Endothelial cell of umbilical vein (primary cell): ENCODE measurements at regions of chr1 and their contacts with region 1.

Region 1: GRCh38 chr1:3491291-3492246 is 37.1 kb downstream of the ARHGEF16 start:
- DNase-seq: peak; percentile 62
- H3K4me3 ChIP-seq: no peak overlapping the region
- H3K27ac ChIP-seq: no peak overlapping the region
- H3K4me1 ChIP-seq: no peaks in the 10 kb centered on the region
- H3K27me3 ChIP-seq: no peaks in the 10 kb centered on the region
- CTCF ChIP-seq: peak; percentile 88 to 98
- POLR2A ChIP-seq: no peak

Region 2: DNA sequence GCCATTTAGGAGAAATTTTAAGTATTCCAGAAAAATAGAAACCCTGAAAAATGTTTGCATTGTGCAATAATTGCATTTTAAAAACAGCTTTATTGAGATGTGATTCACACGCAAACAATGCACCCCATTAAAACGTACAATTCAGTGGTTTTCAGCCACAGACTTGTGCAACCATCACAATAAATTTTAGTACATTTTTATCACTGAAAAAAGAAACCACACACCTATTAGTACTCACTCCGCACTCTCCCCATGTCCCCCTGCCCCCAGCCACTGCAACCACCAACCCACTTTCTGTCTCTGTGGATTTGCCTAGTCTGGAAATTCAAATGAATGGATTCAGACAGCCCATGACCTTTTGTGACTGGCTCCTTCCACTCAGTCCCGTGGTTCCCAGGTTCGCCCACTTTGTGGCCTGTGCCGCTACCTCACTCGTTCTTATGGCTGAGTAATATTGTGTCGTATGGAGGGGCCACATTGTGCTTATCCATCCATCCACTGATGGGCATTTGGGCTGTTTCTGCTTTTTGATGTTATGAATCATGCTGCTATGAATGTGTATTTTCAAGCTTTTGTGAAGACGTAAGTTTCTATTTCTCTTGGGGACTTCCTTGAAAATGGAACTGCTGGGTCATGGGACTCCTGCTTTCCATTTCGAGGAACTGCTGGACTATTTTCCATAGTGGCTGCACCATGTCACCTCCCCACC is 184.8 kb before region 1 on chr1:
- CTCF ChIA-PET with region 1: no interaction called
- POLR2A ChIA-PET with region 1: no interaction called
- dilution Hi-C with region 1: no loop called
- intact Hi-C with region 1: no loop called
- DNase-seq: no peak
- H3K4me3 ChIP-seq: no peak overlapping the region
- H3K27ac ChIP-seq: no peak overlapping the region
- H3K4me1 ChIP-seq: no peaks in the 10 kb centered on the region
- H3K27me3 ChIP-seq: no peaks in the 10 kb centered on the region
- CTCF ChIP-seq: no peak
- POLR2A ChIP-seq: no peak

Region 3: GRCh38 chr1:3504151-3504821 is 12.7 kb after region 1 on chr1:
- CTCF ChIA-PET with region 1: interaction called, 15 read pairs
- POLR2A ChIA-PET with region 1: no interaction called
- dilution Hi-C with region 1: no loop called
- intact Hi-C with region 1: no loop called
- DNase-seq: peak; percentile 94
- H3K4me3 ChIP-seq: no peak overlapping the region
- H3K27ac ChIP-seq: peak overlapping the region; percentile 90
- H3K4me1 ChIP-seq: peaks cover 10% of the 10 kb centered on the region
- H3K27me3 ChIP-seq: no peaks in the 10 kb centered on the region
- CTCF ChIP-seq: no peak
- POLR2A ChIP-seq: no peak

Region 4: DNA sequence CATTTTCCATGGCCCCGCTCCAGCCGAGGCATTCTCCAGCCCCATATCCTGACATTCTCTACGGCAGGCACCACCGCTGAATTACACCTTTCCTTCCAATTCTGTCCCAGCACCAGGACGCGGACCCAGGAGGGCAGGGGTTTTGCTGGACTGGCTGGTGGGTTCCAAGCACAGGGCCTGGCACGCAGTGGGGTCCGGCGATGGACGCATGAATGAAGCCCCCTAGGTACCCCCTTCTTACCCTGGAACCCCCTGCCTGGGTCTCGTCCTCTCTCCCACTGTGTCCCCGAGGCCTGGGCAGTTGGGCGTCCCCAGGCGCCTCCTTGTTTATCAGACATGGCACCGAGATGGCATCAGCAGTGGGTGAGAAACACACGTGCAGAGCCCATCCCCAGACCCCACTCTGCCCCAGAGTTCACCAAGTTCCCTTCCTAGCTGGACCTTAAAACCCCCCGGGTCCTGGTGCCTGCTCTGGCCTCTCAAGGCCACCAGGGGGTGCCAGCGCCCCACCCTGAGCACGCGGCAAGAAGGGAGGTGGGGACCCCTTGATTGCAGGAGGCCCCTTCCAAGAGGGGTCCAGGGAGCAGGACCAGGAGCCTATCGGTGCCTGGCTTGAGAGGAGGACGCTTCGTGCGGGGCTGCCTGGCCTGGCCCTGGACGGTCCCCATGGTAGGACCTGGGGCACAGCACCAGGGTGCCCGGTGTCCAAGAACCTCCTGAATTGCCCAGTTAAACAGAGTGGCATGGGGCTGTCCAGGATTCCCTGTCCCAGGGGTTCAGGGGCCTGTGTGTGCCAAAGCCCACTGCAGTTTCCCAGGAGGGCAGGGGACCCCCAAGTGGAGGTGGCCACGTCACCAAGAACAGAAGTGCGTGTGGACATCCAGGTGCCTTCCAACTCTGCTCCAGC is 73.6 kb after region 1 on chr1:
- CTCF ChIA-PET with region 1: interaction called, 6 read pairs
- POLR2A ChIA-PET with region 1: no interaction called
- dilution Hi-C with region 1: no loop called
- intact Hi-C with region 1: loop called (anchors 1 kb)
- DNase-seq: peak; percentile 26
- H3K4me3 ChIP-seq: no peak overlapping the region
- H3K27ac ChIP-seq: no peak overlapping the region
- H3K4me1 ChIP-seq: no peaks in the 10 kb centered on the region
- H3K27me3 ChIP-seq: no peaks in the 10 kb centered on the region
- CTCF ChIP-seq: peak; percentile 89 to 90
- POLR2A ChIP-seq: no peak

Region 5: GRCh38 chr1:3611170-3612019 is 119.8 kb after region 1 on chr1 and contains the start of gene MEGF6:
- CTCF ChIA-PET with region 1: interaction called, 11 read pairs
- POLR2A ChIA-PET with region 1: no interaction called
- dilution Hi-C with region 1: no loop called
- intact Hi-C with region 1: loop called (anchors 1 kb)
- DNase-seq: peak; percentile 81
- H3K4me3 ChIP-seq: peak within 1 kb of the TSS; percentile 22 to 67 (median 54)
- H3K27ac ChIP-seq: no peak within 1 kb of the TSS
- H3K4me1 ChIP-seq: peaks cover 39% of the 10 kb centered on the region
- H3K27me3 ChIP-seq: no peaks in the 10 kb centered on the region
- CTCF ChIP-seq: no peak
- POLR2A ChIP-seq: no peak
- total RNA-seq, gene MEGF6: 47.4 and 63.7 TPM in 2 replicates

Region 6: DNA sequence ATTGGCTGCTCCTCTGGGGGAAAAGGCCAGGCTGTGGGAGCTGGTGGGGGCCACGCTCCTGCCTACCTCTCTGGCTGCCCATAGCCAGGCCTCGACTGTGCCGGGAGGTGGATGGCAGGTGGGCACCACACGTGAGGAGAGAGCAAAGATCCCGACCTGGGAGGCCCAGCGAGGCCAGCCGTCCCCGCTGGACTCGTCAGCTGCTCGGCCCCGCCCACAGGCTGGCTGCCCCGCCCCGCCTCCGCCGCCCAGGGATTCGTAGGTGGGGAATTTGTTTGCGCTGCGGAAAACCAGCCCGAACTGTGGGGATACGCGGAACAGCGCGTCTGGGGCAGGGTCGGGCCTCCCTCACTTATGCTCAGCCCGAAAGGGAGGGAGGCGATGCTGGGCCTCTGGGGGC is 192.4 kb after region 1 on chr1:
- CTCF ChIA-PET with region 1: no interaction called
- POLR2A ChIA-PET with region 1: no interaction called
- dilution Hi-C with region 1: no loop called
- intact Hi-C with region 1: no loop called
- DNase-seq: no peak
- H3K4me3 ChIP-seq: no peak overlapping the region
- H3K27ac ChIP-seq: no peak overlapping the region
- H3K4me1 ChIP-seq: no peaks in the 10 kb centered on the region
- H3K27me3 ChIP-seq: no peaks in the 10 kb centered on the region
- CTCF ChIP-seq: no peak
- POLR2A ChIP-seq: no peak

Region 7: DNA sequence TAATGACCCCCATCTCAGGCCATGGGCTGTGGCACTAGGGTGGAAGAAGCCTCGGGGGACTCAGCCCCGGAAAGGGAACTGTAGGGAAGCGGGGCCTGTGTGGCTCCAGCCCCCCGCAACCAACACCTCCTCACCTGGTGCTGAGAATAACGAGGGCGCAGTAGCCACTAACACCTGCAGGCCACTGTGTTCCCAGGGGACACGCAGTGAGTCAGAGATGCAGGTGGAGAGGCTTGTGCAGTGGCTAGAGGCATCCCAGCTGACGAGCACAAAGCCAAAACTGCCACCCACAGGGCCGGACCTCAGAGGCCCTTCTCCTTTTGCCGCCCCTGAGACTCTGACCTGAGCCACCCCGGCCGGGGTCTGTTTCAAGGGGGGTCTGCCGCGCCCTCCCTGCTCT is 227.2 kb after region 1 on chr1:
- CTCF ChIA-PET with region 1: no interaction called
- POLR2A ChIA-PET with region 1: no interaction called
- dilution Hi-C with region 1: no loop called
- intact Hi-C with region 1: loop called (anchors 5 kb)
- DNase-seq: no peak
- H3K4me3 ChIP-seq: no peak overlapping the region
- H3K27ac ChIP-seq: no peak overlapping the region
- H3K4me1 ChIP-seq: no peaks in the 10 kb centered on the region
- H3K27me3 ChIP-seq: no peaks in the 10 kb centered on the region
- CTCF ChIP-seq: no peak
- POLR2A ChIP-seq: no peak